H1 (cell line): ENCODE measurements at regions of chr12 and their contacts with region 1.

Region 1: GRCh38 chr12:8078398-8078797 is 3.7 kb upstream of the NECAP1 start:
- DNase-seq: no peak
- H3K4me3 ChIP-seq: no peak overlapping the region
- H3K27ac ChIP-seq: no peak overlapping the region
- H3K4me1 ChIP-seq: 0 out of 7 replicates have a peak, but pooled peaks cover 0 to 3% (median 0%) of the 10 kb centered on the region in 4 experiments
- H3K27me3 ChIP-seq: no peaks in the 10 kb centered on the region
- CTCF ChIP-seq: peak; percentile 22 to 65 (median 47)
- EP300 ChIP-seq: no peak
- POLR2A ChIP-seq: no peak
- RAD21 ChIP-seq: peak; percentile 79 to 81

Region 2: GRCh38 chr12:7884689-7885088 is 193.7 kb before region 1 on chr12:
- CTCF ChIA-PET with region 1: no interaction called
- POLR2A ChIA-PET with region 1: no interaction called
- DNase-seq: no peak
- H3K4me3 ChIP-seq: no peak overlapping the region
- H3K27ac ChIP-seq: no peak overlapping the region
- H3K4me1 ChIP-seq: peaks cover 0 to 2% (median 0%) of the 10 kb centered on the region in 4 experiments; a peak in 1 of 7 replicates
- H3K27me3 ChIP-seq: no peaks in the 10 kb centered on the region
- CTCF ChIP-seq: no peak
- EP300 ChIP-seq: no peak
- POLR2A ChIP-seq: no peak
- RAD21 ChIP-seq: no peak

Region 3: GRCh38 chr12:8045952-8046944 is 32.1 kb before region 1 on chr12:
- CTCF ChIA-PET with region 1: interaction called, 146 read pairs
- POLR2A ChIA-PET with region 1: interaction called, 4 read pairs
- DNase-seq: peak in 1 of 2 experiments; percentile 91
- H3K4me3 ChIP-seq: no peak overlapping the region
- H3K27ac ChIP-seq: no peak overlapping the region
- H3K4me1 ChIP-seq: no peaks in the 10 kb centered on the region
- H3K27me3 ChIP-seq: no peaks in the 10 kb centered on the region
- CTCF ChIP-seq: peak; percentile 81 to 91 (median 84)
- EP300 ChIP-seq: no peak
- POLR2A ChIP-seq: no peak
- RAD21 ChIP-seq: peak; percentile 63 to 71

Region 4: DNA sequence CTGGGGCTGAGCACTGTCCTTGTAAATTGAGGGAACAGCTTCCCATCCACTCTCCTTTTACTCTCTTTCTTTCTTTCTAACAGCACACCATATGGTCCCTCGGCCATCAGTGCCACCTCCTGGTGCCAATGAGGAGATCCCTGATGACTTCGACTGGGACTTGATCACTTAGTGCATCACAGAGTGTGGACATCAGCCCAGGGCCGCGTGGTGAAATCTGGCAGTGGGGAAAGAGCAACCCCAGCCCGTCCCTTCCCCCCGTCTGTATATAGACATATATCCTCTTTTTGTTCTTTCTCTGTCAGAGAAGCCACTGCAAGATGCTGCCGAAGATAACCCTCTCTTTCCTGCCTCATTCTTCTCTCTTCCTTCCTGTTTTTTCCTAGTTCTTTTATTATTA is 25.7 kb before region 1 on chr12:
- CTCF ChIA-PET with region 1: interaction called, 146 read pairs
- POLR2A ChIA-PET with region 1: no interaction called
- DNase-seq: no peak
- H3K4me3 ChIP-seq: no peak overlapping the region
- H3K27ac ChIP-seq: no peak overlapping the region
- H3K4me1 ChIP-seq: no peaks in the 10 kb centered on the region
- H3K27me3 ChIP-seq: no peaks in the 10 kb centered on the region
- CTCF ChIP-seq: no peak
- EP300 ChIP-seq: no peak
- POLR2A ChIP-seq: no peak
- RAD21 ChIP-seq: no peak; a peak in 1 of 4 replicates

Region 5: DNA sequence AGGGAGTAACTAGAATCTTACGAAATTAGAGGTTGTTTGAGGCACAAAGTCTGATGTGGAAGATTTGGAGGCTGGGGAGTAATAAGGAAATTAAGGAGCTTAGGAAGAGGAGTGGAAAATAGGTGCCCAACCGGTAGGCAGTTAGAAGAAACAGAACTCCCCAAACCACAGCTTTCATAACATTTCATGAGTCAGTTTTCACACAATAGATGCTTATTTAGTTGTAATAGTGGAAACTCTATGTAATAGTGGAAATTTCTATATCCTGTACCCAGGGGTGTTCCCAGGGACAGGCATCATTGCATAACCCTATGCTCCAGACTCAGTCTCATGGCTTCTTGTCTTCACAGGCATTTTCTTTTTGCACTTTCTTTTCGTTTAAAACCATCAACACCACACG is 20.6 kb before region 1 on chr12:
- CTCF ChIA-PET with region 1: interaction called, 27 read pairs
- POLR2A ChIA-PET with region 1: interaction called, 3 read pairs
- DNase-seq: no peak
- H3K4me3 ChIP-seq: no peak overlapping the region
- H3K27ac ChIP-seq: no peak overlapping the region
- H3K4me1 ChIP-seq: no peaks in the 10 kb centered on the region
- H3K27me3 ChIP-seq: no peaks in the 10 kb centered on the region
- CTCF ChIP-seq: no peak
- EP300 ChIP-seq: no peak
- POLR2A ChIP-seq: no peak
- RAD21 ChIP-seq: no peak

Region 6: DNA sequence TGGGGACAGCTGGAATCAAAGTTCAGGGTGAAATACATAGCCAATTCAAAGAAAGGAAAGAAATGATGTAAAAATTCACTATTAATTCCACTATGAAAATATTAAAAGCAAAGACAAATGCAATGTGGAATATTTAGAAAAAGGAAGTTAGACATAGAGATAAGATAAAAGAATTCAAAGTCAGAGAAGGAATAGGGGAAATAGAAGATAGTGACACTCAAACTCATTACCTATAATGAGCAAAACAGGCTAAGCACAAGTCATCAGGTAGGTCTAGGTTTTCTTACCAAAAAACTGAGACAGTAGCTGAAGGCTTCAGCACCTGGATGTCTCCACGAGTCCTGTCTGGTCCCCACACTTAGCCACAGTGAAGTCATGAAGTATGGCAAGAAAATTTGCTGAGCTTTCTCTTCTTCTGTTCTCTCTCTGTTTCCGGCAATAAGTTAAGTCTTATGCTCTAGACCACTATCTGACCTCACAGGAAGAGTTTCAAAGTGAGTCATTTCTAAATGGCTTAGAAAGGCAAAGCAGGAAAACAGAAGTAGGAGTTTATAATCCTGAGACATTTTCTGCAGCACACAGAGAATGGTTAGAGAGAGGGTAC is 12.3 kb before region 1 on chr12 and contains the start of gene C3AR1:
- CTCF ChIA-PET with region 1: interaction called, 12 read pairs
- POLR2A ChIA-PET with region 1: interaction called, 3 read pairs
- DNase-seq: no peak
- H3K4me3 ChIP-seq: no peak within 1 kb of the TSS
- H3K27ac ChIP-seq: no peak within 1 kb of the TSS
- H3K4me1 ChIP-seq: no peaks in the 10 kb centered on the region
- H3K27me3 ChIP-seq: no peaks in the 10 kb centered on the region
- CTCF ChIP-seq: no peak
- EP300 ChIP-seq: no peak
- POLR2A ChIP-seq: no peak
- RAD21 ChIP-seq: no peak
- total RNA-seq, gene C3AR1: not detected in 2 replicates